ENCODE measurements at regions of chr13 and their contacts with region 1.

Region 1: GRCh38 chr13:77291774-77292173 is 35.1 kb downstream of the MYCBP2 start:
- DNase-seq: no peak
- H3K4me3 Mint-ChIP-seq: no peak overlapping the region
- H3K27ac Mint-ChIP-seq: peak overlapping the region; percentile 3
- H3K4me1 Mint-ChIP-seq: peaks cover 38% of the 10 kb centered on the region
- H3K27me3 Mint-ChIP-seq: no peaks in the 10 kb centered on the region

Region 2: GRCh38 chr13:76425935-76426334 is 865.8 kb before region 1 on chr13:
- CTCF ChIA-PET with region 1: no interaction called
- intact Hi-C with region 1: no loop called
- DNase-seq: no peak
- H3K4me3 Mint-ChIP-seq: no peak overlapping the region
- H3K27ac Mint-ChIP-seq: no peak overlapping the region
- H3K4me1 Mint-ChIP-seq: no peaks in the 10 kb centered on the region
- H3K27me3 Mint-ChIP-seq: peaks cover 6% of the 10 kb centered on the region

Region 3: GRCh38 chr13:77184455-77184854 is 107.3 kb before region 1 on chr13:
- CTCF ChIA-PET with region 1: no interaction called
- intact Hi-C with region 1: loop called (anchors 1 kb)
- DNase-seq: peak; percentile 76
- H3K4me3 Mint-ChIP-seq: no peak overlapping the region
- H3K27ac Mint-ChIP-seq: peak overlapping the region; percentile 20
- H3K4me1 Mint-ChIP-seq: peaks cover 16% of the 10 kb centered on the region
- H3K27me3 Mint-ChIP-seq: no peaks in the 10 kb centered on the region

Region 4: GRCh38 chr13:77207943-77208342 is 83.8 kb before region 1 on chr13:
- CTCF ChIA-PET with region 1: no interaction called
- intact Hi-C with region 1: no loop called
- DNase-seq: no peak
- H3K4me3 Mint-ChIP-seq: no peak overlapping the region
- H3K27ac Mint-ChIP-seq: peak overlapping the region; percentile 43
- H3K4me1 Mint-ChIP-seq: peaks cover 14% of the 10 kb centered on the region
- H3K27me3 Mint-ChIP-seq: no peaks in the 10 kb centered on the region

Region 5: GRCh38 chr13:77345150-77345780 is 53.5 kb after region 1 on chr13:
- CTCF ChIA-PET with region 1: no interaction called
- intact Hi-C with region 1: loop called (anchors 1 kb)
- DNase-seq: peak; percentile 43
- H3K4me3 Mint-ChIP-seq: no peak overlapping the region
- H3K27ac Mint-ChIP-seq: peak overlapping the region; percentile 79
- H3K4me1 Mint-ChIP-seq: peaks cover 20% of the 10 kb centered on the region
- H3K27me3 Mint-ChIP-seq: no peaks in the 10 kb centered on the region

Region 6: GRCh38 chr13:77729502-77730221 is 437.9 kb after region 1 on chr13:
- CTCF ChIA-PET with region 1: no interaction called
- intact Hi-C with region 1: loop called (anchors 1 kb)
- DNase-seq: peak; percentile 69
- H3K4me3 Mint-ChIP-seq: no peak overlapping the region
- H3K27ac Mint-ChIP-seq: peak overlapping the region; percentile 57
- H3K4me1 Mint-ChIP-seq: peaks cover 31% of the 10 kb centered on the region
- H3K27me3 Mint-ChIP-seq: no peaks in the 10 kb centered on the region